Activated CD8-positive, alpha-beta T cell treated with anti-CD3 and anti-CD28 coated beads, Interleukin-2, amount 10 ng/mL, durations not matched to agents 7 days and 5 days (primary cell): ENCODE measurements at regions of chr2 and their contacts with region 1.

Region 1: GRCh38 chr2:84925724-84926376 is 20.4 kb downstream of the TMSB10 start:
- DNase-seq: peak; percentile 99
- ATAC-seq: peak; percentile 91
- H3K4me3 Mint-ChIP-seq: peak overlapping the region; percentile 89
- H3K27ac Mint-ChIP-seq: peak overlapping the region; percentile 88
- H3K4me1 Mint-ChIP-seq: peaks cover 49% of the 10 kb centered on the region
- H3K27me3 Mint-ChIP-seq: no peaks in the 10 kb centered on the region

Region 2: GRCh38 chr2:84493514-84493913 is 432.3 kb before region 1 on chr2:
- CTCF ChIA-PET with region 1: interaction called, 27 read pairs
- POLR2A ChIA-PET with region 1: interaction called, 3 read pairs
- DNase-seq: no peak
- ATAC-seq: no peak
- H3K4me3 Mint-ChIP-seq: no peak overlapping the region
- H3K27ac Mint-ChIP-seq: no peak overlapping the region
- H3K4me1 Mint-ChIP-seq: peaks cover 6% of the 10 kb centered on the region
- H3K27me3 Mint-ChIP-seq: no peaks in the 10 kb centered on the region

Region 3: GRCh38 chr2:84800194-84800805 is 125.5 kb before region 1 on chr2:
- CTCF ChIA-PET with region 1: no interaction called
- POLR2A ChIA-PET with region 1: no interaction called
- DNase-seq: no peak
- ATAC-seq: no peak
- H3K4me3 Mint-ChIP-seq: peak overlapping the region; percentile 26
- H3K27ac Mint-ChIP-seq: peak overlapping the region; percentile 5
- H3K4me1 Mint-ChIP-seq: peaks cover 13% of the 10 kb centered on the region
- H3K27me3 Mint-ChIP-seq: no peaks in the 10 kb centered on the region

Region 4: GRCh38 chr2:84832772-84833461 is 92.9 kb before region 1 on chr2:
- CTCF ChIA-PET with region 1: interaction called, 19 read pairs
- POLR2A ChIA-PET with region 1: no interaction called
- DNase-seq: peak; percentile 46
- ATAC-seq: peak; percentile 77
- H3K4me3 Mint-ChIP-seq: peak overlapping the region; percentile 73
- H3K27ac Mint-ChIP-seq: peak overlapping the region; percentile 93
- H3K4me1 Mint-ChIP-seq: peaks cover 21% of the 10 kb centered on the region
- H3K27me3 Mint-ChIP-seq: no peaks in the 10 kb centered on the region

Region 5: GRCh38 chr2:84881581-84882414 is 44.1 kb before region 1 on chr2:
- CTCF ChIA-PET with region 1: interaction called, 397 read pairs
- POLR2A ChIA-PET with region 1: interaction called, 21 read pairs
- DNase-seq: peak; percentile 94
- ATAC-seq: peak; percentile 71
- H3K4me3 Mint-ChIP-seq: peak overlapping the region; percentile 83
- H3K27ac Mint-ChIP-seq: peak overlapping the region; percentile 88
- H3K4me1 Mint-ChIP-seq: peaks cover 66% of the 10 kb centered on the region
- H3K27me3 Mint-ChIP-seq: no peaks in the 10 kb centered on the region

Region 6: GRCh38 chr2:84939426-84940087 is 13.7 kb after region 1 on chr2:
- CTCF ChIA-PET with region 1: interaction called, 270 read pairs
- POLR2A ChIA-PET with region 1: interaction called, 27 read pairs
- DNase-seq: peak; percentile 93
- ATAC-seq: peak; percentile 89
- H3K4me3 Mint-ChIP-seq: peak overlapping the region; percentile 69
- H3K27ac Mint-ChIP-seq: peak overlapping the region; percentile 96
- H3K4me1 Mint-ChIP-seq: peaks cover 65% of the 10 kb centered on the region
- H3K27me3 Mint-ChIP-seq: no peaks in the 10 kb centered on the region

Region 7: DNA sequence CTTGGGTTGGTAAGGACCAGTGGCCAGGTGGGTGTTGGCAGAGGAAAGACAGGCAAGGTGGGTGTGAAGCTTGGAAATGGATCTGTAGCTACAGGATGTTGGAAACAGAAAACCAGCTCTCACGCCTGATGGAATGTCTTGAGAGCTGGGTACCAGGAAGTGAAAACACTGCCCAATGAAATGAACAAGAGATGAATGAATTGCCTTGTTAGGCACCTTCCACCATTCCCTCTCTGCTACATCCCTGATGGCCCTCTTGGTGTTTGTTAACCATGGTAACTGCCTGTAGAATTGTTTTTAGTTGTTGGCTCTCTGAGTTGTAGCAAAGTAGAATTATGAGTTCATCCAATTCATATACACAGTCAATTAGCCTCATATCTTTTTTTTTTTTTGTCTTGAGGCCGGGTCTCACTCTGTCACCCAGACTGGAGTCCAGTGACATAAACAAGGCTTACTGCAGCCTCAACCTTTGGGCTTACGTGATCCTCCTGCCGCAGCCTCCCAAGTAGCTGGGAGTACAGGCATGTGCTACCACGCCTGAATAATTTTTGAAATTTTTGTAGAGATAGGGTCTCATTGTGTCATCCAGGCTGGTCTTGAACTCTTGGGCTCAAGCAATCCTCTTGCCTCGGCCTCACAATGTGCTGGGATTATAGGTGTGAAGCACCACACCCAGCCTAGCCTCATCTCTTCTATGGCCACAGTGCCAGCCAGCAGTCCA is 54.6 kb after region 1 on chr2:
- CTCF ChIA-PET with region 1: interaction called, 13 read pairs
- POLR2A ChIA-PET with region 1: no interaction called
- DNase-seq: no peak
- ATAC-seq: peak; percentile 42
- H3K4me3 Mint-ChIP-seq: no peak overlapping the region
- H3K27ac Mint-ChIP-seq: peak overlapping the region; percentile 53
- H3K4me1 Mint-ChIP-seq: peaks cover 43% of the 10 kb centered on the region
- H3K27me3 Mint-ChIP-seq: no peaks in the 10 kb centered on the region

Region 8: DNA sequence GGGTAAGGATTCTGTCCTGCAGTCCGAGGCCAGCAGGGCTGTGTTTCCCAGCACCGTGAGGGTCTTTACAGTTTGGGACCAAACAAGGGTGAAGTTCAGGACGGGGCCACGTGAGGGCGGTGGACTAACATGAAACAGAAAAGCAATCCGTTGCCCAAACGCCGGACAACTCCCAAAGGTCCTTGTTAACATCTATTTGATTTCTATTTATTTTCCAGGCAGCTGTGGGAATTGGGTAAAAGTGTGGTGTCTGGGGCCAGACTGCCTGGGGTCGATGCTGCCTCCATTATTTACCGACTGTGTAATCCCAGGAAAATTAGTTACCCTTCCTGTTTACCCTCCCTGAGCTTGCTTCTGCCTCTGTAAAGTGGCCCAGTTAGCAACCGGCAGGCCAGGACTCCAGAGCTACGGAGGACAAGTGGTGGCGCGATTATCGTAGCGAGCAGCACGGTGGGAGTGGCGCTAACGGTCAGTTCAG is 141.1 kb after region 1 on chr2:
- CTCF ChIA-PET with region 1: interaction called, 10 read pairs
- POLR2A ChIA-PET with region 1: no interaction called
- DNase-seq: peak; percentile 63
- ATAC-seq: peak; percentile 53
- H3K4me3 Mint-ChIP-seq: no peak overlapping the region
- H3K27ac Mint-ChIP-seq: no peak overlapping the region
- H3K4me1 Mint-ChIP-seq: no peaks in the 10 kb centered on the region
- H3K27me3 Mint-ChIP-seq: peaks cover 25% of the 10 kb centered on the region